Heart right ventricle (tissue), 16 donors: ENCODE measurements at regions of chr10 and their contacts with region 1.

Region 1: GRCh38 chr10:63711867-63712716 is 190.9 kb downstream of the REEP3 start:
- DNase-seq: peak; percentile 90 to 94
- ATAC-seq: peak; percentile 90 to 97 (median 93)
- H3K4me3 ChIP-seq: no peak overlapping the region
- H3K27ac ChIP-seq: peak overlapping the region; percentile 76 to 93 (median 82)
- H3K4me1 ChIP-seq: peaks cover 15 to 78% (median 55%) of the 10 kb centered on the region in 9 donors
- H3K27me3 ChIP-seq: no peaks in the 10 kb centered on the region
- CTCF ChIP-seq: no peak

Region 2: GRCh38 chr10:63206997-63207811 is 504.9 kb before region 1 on chr10:
- intact Hi-C with region 1: loop called in 4 of 10 experiments (anchors 5 to 10 kb)
- DNase-seq: peak in 1 of 2 donors; percentile 51
- ATAC-seq: peak; percentile 66 to 83 (median 80)
- H3K4me3 ChIP-seq: peak overlapping the region in 4 of 10 donors; percentile 9 to 26 (median 18)
- H3K27ac ChIP-seq: peak overlapping the region; percentile 7 to 80 (median 74)
- H3K4me1 ChIP-seq: peaks cover 0 to 78% (median 72%) of the 10 kb centered on the region in 9 donors
- H3K27me3 ChIP-seq: no peaks in the 10 kb centered on the region
- CTCF ChIP-seq: no peak

Region 3: DNA sequence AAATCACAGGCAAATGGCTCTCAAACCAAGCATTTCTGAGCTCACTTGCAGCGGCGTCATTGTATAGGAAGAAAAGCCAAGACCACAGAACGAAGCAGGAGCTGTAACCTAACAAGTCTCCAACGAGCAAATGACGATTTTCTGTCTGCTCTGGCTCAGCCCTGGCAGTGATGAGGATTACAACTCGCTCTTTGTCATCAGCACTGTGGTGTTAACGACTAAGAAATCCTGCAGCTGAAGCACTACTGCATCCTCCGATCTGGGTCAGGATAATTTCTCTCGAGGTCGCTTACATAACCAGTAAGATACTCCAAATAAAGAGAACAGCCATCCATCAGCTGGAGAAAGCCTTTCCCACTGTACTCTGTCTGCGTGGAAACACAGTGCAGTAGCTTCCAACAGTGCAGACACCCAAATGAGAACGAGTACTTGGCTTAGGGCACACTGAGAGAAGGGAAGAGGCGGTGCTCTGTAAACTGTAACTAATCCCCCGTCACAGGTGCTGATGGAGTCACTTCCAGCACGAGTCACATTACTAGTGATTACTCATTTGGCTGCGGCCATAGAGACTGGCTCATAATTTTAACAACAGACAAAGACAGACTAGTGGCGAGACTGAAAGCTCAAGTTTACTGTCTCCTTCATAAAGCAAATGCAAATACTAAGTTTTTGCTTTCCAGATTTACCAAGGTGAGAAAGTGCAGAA is 443.1 kb before region 1 on chr10:
- intact Hi-C with region 1: loop called in 2 of 10 experiments (anchors 2 to 5 kb)
- DNase-seq: peak; percentile 21 to 93
- ATAC-seq: peak; percentile 94 to 99 (median 96)
- H3K4me3 ChIP-seq: peak overlapping the region; percentile 41 to 66 (median 59)
- H3K27ac ChIP-seq: peak overlapping the region; percentile 83 to 95 (median 89)
- H3K4me1 ChIP-seq: peaks cover 0 to 40% (median 23%) of the 10 kb centered on the region in 9 donors
- H3K27me3 ChIP-seq: no peaks in the 10 kb centered on the region
- CTCF ChIP-seq: peak in 6 of 9 donors; percentile 24 to 55 (median 46)

Region 4: GRCh38 chr10:63515002-63515763 is 196.9 kb before region 1 on chr10:
- intact Hi-C with region 1: loop called in 5 of 10 experiments (anchors 5 to 10 kb)
- DNase-seq: peak in 1 of 2 donors; percentile 32
- ATAC-seq: peak; percentile 12 to 89 (median 68)
- H3K4me3 ChIP-seq: peak overlapping the region in 1 of 10 donors; percentile 7
- H3K27ac ChIP-seq: peak overlapping the region in 9 of 10 donors; percentile 29 to 87 (median 71)
- H3K4me1 ChIP-seq: peaks cover 0 to 59% (median 50%) of the 10 kb centered on the region in 9 donors
- H3K27me3 ChIP-seq: no peaks in the 10 kb centered on the region
- CTCF ChIP-seq: no peak

Region 5: DNA sequence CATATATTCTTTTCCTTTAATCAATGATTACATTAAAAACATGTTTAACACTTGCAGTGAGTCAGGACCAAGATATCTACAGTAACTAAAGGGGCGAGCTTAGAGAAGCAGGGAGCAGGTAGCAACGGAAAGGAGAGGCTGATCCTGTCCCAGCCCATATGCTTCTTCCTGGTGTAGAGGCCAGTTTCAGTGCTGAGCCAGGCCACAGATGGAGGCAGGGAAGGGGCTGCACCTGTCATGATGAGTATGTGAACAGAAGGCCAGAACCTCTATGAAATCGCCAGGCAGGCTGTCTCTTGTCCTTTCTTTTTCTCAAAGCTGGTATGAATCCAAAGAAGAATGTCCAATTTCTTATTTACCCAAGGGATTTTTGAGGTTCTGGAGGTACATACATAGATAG is 174.6 kb before region 1 on chr10:
- intact Hi-C with region 1: no loop called
- DNase-seq: no peak
- ATAC-seq: no peak
- H3K4me3 ChIP-seq: no peak overlapping the region
- H3K27ac ChIP-seq: no peak overlapping the region
- H3K4me1 ChIP-seq: peaks cover 0 to 26% (median 4%) of the 10 kb centered on the region in 9 donors
- H3K27me3 ChIP-seq: no peaks in the 10 kb centered on the region
- CTCF ChIP-seq: no peak

Region 6: DNA sequence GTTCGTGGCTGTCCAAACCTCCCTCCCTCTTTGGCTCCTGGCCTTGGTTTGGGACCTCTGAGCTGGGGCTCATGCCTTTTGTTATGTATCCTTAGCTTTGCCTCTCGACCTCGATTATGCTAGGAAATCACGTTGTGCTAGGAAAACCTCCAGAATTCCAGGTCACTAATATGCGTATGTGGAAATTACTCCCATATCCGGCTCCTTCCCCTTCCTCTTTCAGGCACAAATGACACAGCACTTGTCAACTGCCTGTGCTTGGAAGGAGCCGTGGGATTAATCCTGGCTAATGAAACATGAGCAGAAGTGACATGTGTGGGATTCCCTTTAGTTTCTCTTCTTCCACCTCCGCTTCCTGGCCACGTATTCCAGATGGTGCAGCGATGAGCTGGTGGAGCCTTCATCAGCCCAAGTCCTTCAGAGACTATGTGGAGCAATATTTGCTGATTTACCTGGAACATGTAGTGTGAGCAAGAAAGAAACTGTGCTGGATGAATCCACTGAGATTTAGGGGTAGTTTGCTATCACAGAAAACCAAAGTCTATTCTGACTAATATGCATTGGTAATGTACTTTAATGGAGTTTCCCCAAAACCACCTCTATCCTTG is 41.7 kb before region 1 on chr10:
- intact Hi-C with region 1: loop called in 5 of 10 experiments (anchors 2 to 5 kb)
- DNase-seq: peak in 1 of 2 donors; percentile 80
- ATAC-seq: peak; percentile 74 to 92 (median 88)
- H3K4me3 ChIP-seq: peak overlapping the region in 2 of 10 donors; percentile 3 to 18
- H3K27ac ChIP-seq: peak overlapping the region; percentile 69 to 89 (median 77)
- H3K4me1 ChIP-seq: peaks cover 3 to 62% (median 53%) of the 10 kb centered on the region in 9 donors
- H3K27me3 ChIP-seq: no peaks in the 10 kb centered on the region
- CTCF ChIP-seq: no peak